ENCODE measurements at regions of chr7 and their contacts with region 1.

Region 1: DNA sequence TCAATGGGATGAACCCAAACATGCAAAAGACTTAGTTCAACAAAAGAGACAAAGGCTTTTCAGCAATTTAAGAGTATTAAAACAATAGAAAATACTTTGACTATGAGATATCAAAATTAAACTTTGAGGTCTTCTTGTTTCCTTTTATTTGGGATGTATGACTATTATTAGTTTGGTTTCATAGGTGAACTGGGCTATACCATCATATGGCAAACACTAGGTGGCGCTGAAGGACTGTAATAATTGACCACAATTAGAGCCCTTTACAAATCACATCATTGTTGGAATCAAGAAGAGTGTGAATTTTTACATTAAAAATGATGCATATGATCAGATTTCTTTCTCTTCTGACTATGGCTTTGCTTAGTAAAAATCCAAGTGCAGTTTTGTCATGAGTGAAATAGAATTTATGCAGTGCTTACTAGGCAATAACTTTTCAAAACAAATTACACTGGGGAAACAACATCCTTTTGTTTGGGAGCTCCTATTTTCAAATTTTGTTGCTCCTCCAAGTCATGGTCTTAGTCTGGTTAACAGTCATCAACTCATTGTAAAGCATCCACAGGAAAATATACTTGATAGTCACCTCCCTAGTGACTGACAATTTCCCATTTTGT is 14.7 kb upstream of the NXPH1 start:
- DNase-seq: peak; percentile 65
- H3K4me3 ChIP-seq: no peak overlapping the region
- H3K27ac ChIP-seq: no peak overlapping the region
- H3K4me1 ChIP-seq: no peaks in the 10 kb centered on the region
- H3K27me3 ChIP-seq: peaks cover 14% of the 10 kb centered on the region
- CTCF ChIP-seq: peak; percentile 84

Region 2: GRCh38 chr7:8724080-8724718 is 305.5 kb after region 1 on chr7:
- CTCF ChIA-PET with region 1: no interaction called
- POLR2A ChIA-PET with region 1: no interaction called
- intact Hi-C with region 1: loop called (anchors 2 kb)
- DNase-seq: peak; percentile 54
- H3K4me3 ChIP-seq: no peak overlapping the region
- H3K27ac ChIP-seq: no peak overlapping the region
- H3K4me1 ChIP-seq: no peaks in the 10 kb centered on the region
- H3K27me3 ChIP-seq: no peaks in the 10 kb centered on the region
- CTCF ChIP-seq: peak; percentile 75

Region 3: DNA sequence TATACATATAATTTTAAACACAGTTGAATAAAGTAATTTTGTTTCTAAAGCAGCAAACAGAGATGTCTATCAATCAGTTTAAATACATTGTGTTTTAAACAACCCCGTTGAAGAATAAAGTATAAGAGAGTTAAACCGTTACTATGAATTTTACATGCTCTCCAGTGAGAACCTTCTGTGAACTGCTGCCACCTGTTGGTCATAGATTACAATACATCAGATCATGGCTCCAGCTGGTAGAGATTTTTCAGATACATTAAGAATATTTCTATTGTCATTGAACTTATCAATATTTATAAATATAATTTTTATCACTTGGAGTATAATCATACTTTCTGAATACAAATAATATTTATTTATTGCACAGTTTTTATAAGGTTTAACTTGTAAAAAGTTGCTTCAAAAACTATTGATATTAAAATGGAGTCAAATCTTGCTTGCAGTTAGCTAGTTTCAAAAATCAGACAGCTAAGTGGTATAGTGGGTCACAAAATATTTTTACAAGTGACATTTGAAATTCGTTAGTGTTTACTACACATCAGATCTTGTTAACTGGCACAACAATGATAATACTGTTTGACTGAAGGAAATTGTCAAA is 1993.8 kb after region 1 on chr7:
- CTCF ChIA-PET with region 1: no interaction called
- POLR2A ChIA-PET with region 1: no interaction called
- intact Hi-C with region 1: loop called (anchors 2 kb)
- DNase-seq: peak; percentile 54
- H3K4me3 ChIP-seq: no peak overlapping the region
- H3K27ac ChIP-seq: no peak overlapping the region
- H3K4me1 ChIP-seq: no peaks in the 10 kb centered on the region
- H3K27me3 ChIP-seq: no peaks in the 10 kb centered on the region
- CTCF ChIP-seq: peak; percentile 69

Measured in A673 (cell line).